ENCODE measurements at regions of chr22 and their contacts with region 1.

Region 1: GRCh38 chr22:31345331-31346254 is 553 bp downstream of the PATZ1 start:
- DNase-seq: peak; percentile 83 to 89
- ATAC-seq: peak; percentile 52 to 75 (median 67)
- H3K4me3 ChIP-seq: peak overlapping the region; percentile 47 to 91 (median 74)
- H3K27ac ChIP-seq: peak overlapping the region; percentile 87 to 97 (median 92)
- H3K4me1 ChIP-seq: peaks cover 20 to 62% (median 44%) of the 10 kb centered on the region in 9 donors
- H3K27me3 ChIP-seq: no peaks in the 10 kb centered on the region
- CTCF ChIP-seq: peak; percentile 68 to 91 (median 81)

Region 2: GRCh38 chr22:31046539-31047226 is 298.9 kb before region 1 on chr22:
- intact Hi-C with region 1: no loop called
- DNase-seq: peak; percentile 80 to 93
- ATAC-seq: peak; percentile 87 to 96 (median 92)
- H3K4me3 ChIP-seq: peak overlapping the region in 1 of 10 donors; percentile 19
- H3K27ac ChIP-seq: peak overlapping the region; percentile 68 to 91 (median 82)
- H3K4me1 ChIP-seq: peaks cover 14 to 81% (median 58%) of the 10 kb centered on the region in 9 donors
- H3K27me3 ChIP-seq: no peaks in the 10 kb centered on the region
- CTCF ChIP-seq: no peak

Region 3: GRCh38 chr22:31290494-31291471 is 54.8 kb before region 1 on chr22:
- intact Hi-C with region 1: loop called in 1 of 10 experiments (anchors 2 kb)
- DNase-seq: peak; percentile 94 to 96
- ATAC-seq: peak; percentile 93 to 96 (median 94)
- H3K4me3 ChIP-seq: peak overlapping the region; percentile 42 to 89 (median 78)
- H3K27ac ChIP-seq: peak overlapping the region; percentile 93 to 99 (median 95)
- H3K4me1 ChIP-seq: peaks cover 18 to 89% (median 52%) of the 10 kb centered on the region in 9 donors
- H3K27me3 ChIP-seq: no peaks in the 10 kb centered on the region
- CTCF ChIP-seq: no peak

Region 4: GRCh38 chr22:31399211-31400028 is 53.8 kb after region 1 on chr22 and contains the start of gene DRG1:
- intact Hi-C with region 1: loop called in 8 of 10 experiments (anchors 1 to 5 kb)
- DNase-seq: peak; percentile 98 to 99
- ATAC-seq: peak; percentile 99 to 100 (median 100)
- H3K4me3 ChIP-seq: peak within 1 kb of the TSS; percentile 70 to 100 (median 84)
- H3K27ac ChIP-seq: peak within 1 kb of the TSS; percentile 71 to 94 (median 88)
- H3K4me1 ChIP-seq: peaks cover 0 to 26% (median 18%) of the 10 kb centered on the region in 9 donors
- H3K27me3 ChIP-seq: no peaks in the 10 kb centered on the region
- CTCF ChIP-seq: peak in 2 of 9 donors; percentile 12 to 15
- total RNA-seq, gene DRG1: 50.4 to 76.7 (median 60.2) TPM

Region 5: GRCh38 chr22:31425331-31426050 is 79.9 kb after region 1 on chr22:
- intact Hi-C with region 1: no loop called
- DNase-seq: no peak
- ATAC-seq: no peak
- H3K4me3 ChIP-seq: no peak overlapping the region
- H3K27ac ChIP-seq: no peak overlapping the region
- H3K4me1 ChIP-seq: no peaks in the 10 kb centered on the region
- H3K27me3 ChIP-seq: no peaks in the 10 kb centered on the region
- CTCF ChIP-seq: no peak

Region 6: DNA sequence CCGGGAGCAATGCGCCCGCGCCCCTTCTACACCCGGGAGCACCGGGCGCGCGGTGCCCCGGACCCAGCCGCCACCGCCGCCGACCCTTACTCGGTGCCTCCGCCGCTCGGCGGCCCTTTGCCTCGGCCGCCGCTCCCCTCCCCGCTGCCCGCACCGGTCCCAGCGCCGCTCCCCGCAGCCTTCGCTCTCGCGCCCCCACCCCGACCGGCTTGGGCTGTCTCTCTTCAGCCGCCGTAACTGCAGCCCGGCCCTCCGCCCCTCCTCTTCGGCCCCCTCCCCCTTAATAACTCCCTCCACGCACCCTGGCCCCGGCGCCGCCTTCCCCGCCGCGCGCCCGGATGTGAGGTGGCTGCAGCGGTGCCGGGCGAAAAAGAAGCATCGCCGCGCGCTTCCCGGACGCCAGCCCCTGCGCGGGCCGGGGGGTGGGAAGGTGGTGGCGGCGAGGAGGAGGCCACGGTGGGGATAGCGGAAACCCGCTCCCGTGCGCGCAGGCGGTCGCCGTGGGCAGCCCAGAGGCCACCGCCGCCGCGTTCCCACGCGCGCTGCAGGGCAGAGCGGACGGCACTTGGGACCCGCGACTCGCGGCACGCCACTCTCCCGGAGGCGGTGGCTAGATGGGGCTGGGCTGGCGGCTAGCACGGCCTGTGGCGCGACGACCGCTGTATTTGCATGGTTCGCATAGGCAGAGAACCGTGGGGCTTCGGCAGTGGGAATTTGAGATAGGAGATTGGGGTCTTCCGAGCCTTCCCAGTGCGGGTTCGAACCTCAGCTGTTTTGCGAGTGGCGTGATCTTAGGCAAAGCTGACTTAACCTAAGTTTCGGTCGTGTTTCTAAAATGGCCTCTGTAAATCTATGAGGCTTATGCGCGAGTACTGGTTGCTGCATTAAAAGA is 144.3 kb after region 1 on chr22 and contains the start of gene EIF4ENIF1:
- intact Hi-C with region 1: loop called in 4 of 10 experiments (anchors 5 to 10 kb)
- DNase-seq: peak; percentile 90 to 93
- ATAC-seq: peak; percentile 92 to 97 (median 96)
- H3K4me3 ChIP-seq: peak within 1 kb of the TSS; percentile 69 to 94 (median 80)
- H3K27ac ChIP-seq: peak within 1 kb of the TSS; percentile 89 to 100 (median 99)
- H3K4me1 ChIP-seq: peaks cover 2 to 36% (median 32%) of the 10 kb centered on the region in 9 donors
- H3K27me3 ChIP-seq: no peaks in the 10 kb centered on the region
- CTCF ChIP-seq: no peak
- total RNA-seq, gene EIF4ENIF1: 20.3 to 31.9 (median 22.7) TPM

Region 7: GRCh38 chr22:31496007-31496734 is 150.6 kb after region 1 on chr22 and contains the start of gene SFI1:
- intact Hi-C with region 1: loop called in 3 of 10 experiments (anchors 5 to 10 kb)
- DNase-seq: peak; percentile 92
- ATAC-seq: peak; percentile 97 to 99 (median 98)
- H3K4me3 ChIP-seq: peak within 1 kb of the TSS; percentile 70 to 96 (median 84)
- H3K27ac ChIP-seq: peak within 1 kb of the TSS in 9 of 10 donors; percentile 71 to 88 (median 76)
- H3K4me1 ChIP-seq: peaks cover under 1 to 27% (median 19%) of the 10 kb centered on the region in 9 donors
- H3K27me3 ChIP-seq: no peaks in the 10 kb centered on the region
- CTCF ChIP-seq: peak in 7 of 9 donors; percentile 18 to 56 (median 46)
- total RNA-seq, gene SFI1: 6.1 to 12.1 (median 7.3) TPM

Region 8: DNA sequence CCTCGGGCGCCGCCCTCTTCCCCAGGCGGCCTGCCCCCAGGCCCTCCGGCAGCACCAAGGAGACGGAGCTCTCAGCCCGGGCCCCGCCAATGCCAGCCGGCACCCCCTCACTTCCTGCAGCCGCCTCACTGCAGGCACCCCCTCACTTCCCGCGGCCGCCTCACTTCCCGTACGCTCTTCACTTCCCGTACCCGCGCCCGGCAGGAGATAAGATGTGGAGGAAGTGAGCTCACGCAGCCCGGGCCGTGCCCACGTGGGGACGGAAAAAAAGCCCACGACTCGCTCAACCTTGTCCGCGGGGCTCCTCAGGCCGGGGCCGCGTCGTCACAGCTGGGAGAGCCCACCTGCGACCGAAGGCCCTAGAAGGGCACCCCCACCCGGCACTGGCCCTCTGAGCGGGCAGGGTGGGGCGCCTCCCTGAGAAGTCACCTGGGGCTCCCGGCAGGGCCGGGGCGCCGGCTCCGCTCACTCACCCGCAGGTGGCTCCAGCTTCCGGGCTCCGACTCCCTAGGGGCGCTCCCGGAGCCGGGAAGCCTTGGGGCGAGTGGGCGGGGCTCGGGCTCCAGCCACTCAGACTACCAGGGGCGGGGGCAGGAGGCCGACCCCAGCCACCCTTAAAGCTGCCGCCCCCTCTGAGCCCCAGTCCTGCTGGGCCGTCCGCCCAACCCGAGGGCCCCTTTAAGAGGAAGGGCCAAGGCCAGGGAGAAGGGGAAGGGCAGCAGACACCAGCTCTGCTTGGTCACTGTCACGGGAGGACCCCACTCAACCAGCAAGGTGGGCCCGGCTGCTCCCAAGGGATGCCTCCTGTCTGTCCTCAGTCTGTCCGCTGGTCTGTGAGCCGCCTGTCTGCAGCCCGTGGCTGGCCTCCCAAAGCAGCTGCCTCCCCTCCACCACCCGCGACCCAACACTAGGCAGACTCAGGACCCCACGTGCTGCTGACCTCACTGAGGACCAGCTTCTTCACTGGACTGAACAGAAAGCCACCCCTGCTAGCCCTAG is 285.0 kb after region 1 on chr22:
- intact Hi-C with region 1: loop called in 3 of 10 experiments (anchors 5 to 10 kb)
- DNase-seq: peak; percentile 82 to 83
- ATAC-seq: peak; percentile 79 to 91 (median 84)
- H3K4me3 ChIP-seq: peak overlapping the region; percentile 53 to 93 (median 80)
- H3K27ac ChIP-seq: peak overlapping the region; percentile 60 to 97 (median 92)
- H3K4me1 ChIP-seq: peaks cover 22 to 71% (median 47%) of the 10 kb centered on the region in 9 donors
- H3K27me3 ChIP-seq: no peaks in the 10 kb centered on the region
- CTCF ChIP-seq: no peak